Activated CD4-positive, alpha-beta memory T cell treated with anti-CD3 and anti-CD28 coated beads for 36 hours (primary cell): ENCODE measurements at regions of chr4 and their contacts with region 1.

Region 1: GRCh38 chr4:122689972-122690371 is 42.5 kb upstream of the BBS12 start:
- DNase-seq: peak; percentile 58
- H3K4me3 Mint-ChIP-seq: no peak overlapping the region
- H3K27ac Mint-ChIP-seq: peak overlapping the region; percentile 16
- H3K4me1 Mint-ChIP-seq: peaks cover 57% of the 10 kb centered on the region
- H3K27me3 Mint-ChIP-seq: peaks cover 8% of the 10 kb centered on the region

Region 2: GRCh38 chr4:122700178-122700725 is 10.3 kb after region 1 on chr4:
- CTCF ChIA-PET with region 1: interaction called, 3 read pairs
- POLR2A ChIA-PET with region 1: interaction called, 3 read pairs
- intact Hi-C with region 1: loop called (anchors 1 kb)
- DNase-seq: peak; percentile 15
- H3K4me3 Mint-ChIP-seq: peak overlapping the region; percentile 64
- H3K27ac Mint-ChIP-seq: peak overlapping the region; percentile 92
- H3K4me1 Mint-ChIP-seq: peaks cover 48% of the 10 kb centered on the region
- H3K27me3 Mint-ChIP-seq: peaks cover 5% of the 10 kb centered on the region